OCI-LY7 (cell line): ENCODE measurements at regions of chr14 and their contacts with region 1.

Region 1: DNA sequence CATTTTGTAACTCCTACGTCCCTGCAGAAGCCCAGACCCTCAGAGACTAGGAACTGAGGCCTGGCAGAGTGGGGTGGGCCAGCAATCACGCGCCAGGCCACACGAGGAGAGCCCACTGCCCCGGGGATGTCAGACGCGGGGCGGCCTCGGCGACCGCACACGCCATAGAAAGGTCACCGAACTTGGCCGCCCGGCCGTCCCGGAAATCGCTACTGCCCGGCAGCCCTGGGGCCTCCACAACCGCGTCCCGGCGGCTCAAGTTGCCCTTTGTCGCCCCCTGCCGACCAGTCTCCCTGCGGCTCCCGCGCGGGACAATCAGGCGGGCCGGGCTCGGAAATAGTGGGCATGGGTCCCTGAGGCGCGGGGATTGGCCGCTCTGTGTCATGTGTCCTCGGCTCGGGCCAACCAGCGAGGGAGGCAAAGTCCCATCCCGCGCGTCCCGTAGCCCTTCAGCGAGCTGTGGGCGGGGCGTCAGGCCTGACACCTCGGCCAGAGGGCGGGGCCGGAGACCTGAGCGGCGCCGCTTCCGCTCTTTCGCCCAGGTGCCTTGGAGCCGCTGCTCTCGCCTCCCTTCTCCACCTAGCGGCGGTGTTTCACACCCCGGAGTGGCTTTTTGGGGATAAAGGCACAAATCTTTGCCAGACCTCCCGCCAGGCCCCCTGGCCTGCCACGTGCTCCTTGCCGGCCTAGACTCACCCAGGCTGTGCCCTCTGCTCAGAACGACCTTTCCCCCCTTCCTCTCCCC is 33.4 kb upstream of the DEGS2 start:
- DNase-seq: peak; percentile 100
- H3K4me3 ChIP-seq: peak overlapping the region; percentile 65
- H3K27ac ChIP-seq: peak overlapping the region; percentile 48
- H3K4me1 ChIP-seq: peaks cover 17% of the 10 kb centered on the region
- CTCF ChIP-seq: peak; percentile 84

Region 2: DNA sequence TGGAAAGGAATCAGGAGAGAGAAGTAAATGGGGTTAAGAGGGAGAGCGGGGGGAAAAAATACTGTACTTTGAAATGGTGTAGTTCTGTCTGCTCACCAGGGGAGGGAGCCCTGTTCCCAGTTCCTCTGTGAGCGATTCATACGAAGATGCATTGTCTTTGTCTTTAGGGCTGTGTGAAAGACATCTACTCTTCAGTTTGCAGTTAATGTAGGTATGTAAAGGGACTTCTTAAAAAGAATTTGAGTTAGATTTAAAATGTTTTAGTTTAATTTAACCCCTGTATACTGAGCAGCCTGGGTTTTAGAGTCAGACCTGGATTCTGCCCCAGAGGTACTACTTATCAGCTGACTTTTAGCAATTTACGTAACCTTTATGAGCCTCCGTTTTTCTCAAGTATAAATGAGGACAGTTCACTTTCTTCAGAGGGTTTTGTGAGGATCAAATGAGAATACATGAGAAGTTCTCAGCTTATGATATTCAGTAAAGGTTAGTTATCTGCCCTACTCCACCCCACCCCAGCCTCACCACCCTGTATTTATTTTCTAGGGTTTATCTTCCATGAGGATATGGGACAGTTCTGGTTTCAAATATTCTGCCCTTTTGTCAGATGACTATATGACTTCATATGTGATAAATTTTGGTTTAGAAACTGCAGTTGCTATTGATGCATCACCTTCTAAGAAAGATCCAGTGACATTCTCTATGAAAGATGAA is 210.2 kb before region 1 on chr14:
- CTCF ChIA-PET with region 1: no interaction called
- POLR2A ChIA-PET with region 1: interaction called, 3 read pairs
- intact Hi-C with region 1: loop called (anchors 1 kb)
- DNase-seq: peak; percentile 72
- H3K4me3 ChIP-seq: no peak overlapping the region
- H3K27ac ChIP-seq: no peak overlapping the region
- H3K4me1 ChIP-seq: peaks cover 3% of the 10 kb centered on the region
- CTCF ChIP-seq: peak; percentile 97

Region 3: GRCh38 chr14:99995700-99996356 is 197.0 kb before region 1 on chr14:
- CTCF ChIA-PET with region 1: no interaction called
- POLR2A ChIA-PET with region 1: no interaction called
- intact Hi-C with region 1: no loop called
- DNase-seq: peak; percentile 89
- H3K4me3 ChIP-seq: no peak overlapping the region
- H3K27ac ChIP-seq: no peak overlapping the region
- H3K4me1 ChIP-seq: peaks cover 9% of the 10 kb centered on the region
- CTCF ChIP-seq: peak; percentile 92

Region 4: DNA sequence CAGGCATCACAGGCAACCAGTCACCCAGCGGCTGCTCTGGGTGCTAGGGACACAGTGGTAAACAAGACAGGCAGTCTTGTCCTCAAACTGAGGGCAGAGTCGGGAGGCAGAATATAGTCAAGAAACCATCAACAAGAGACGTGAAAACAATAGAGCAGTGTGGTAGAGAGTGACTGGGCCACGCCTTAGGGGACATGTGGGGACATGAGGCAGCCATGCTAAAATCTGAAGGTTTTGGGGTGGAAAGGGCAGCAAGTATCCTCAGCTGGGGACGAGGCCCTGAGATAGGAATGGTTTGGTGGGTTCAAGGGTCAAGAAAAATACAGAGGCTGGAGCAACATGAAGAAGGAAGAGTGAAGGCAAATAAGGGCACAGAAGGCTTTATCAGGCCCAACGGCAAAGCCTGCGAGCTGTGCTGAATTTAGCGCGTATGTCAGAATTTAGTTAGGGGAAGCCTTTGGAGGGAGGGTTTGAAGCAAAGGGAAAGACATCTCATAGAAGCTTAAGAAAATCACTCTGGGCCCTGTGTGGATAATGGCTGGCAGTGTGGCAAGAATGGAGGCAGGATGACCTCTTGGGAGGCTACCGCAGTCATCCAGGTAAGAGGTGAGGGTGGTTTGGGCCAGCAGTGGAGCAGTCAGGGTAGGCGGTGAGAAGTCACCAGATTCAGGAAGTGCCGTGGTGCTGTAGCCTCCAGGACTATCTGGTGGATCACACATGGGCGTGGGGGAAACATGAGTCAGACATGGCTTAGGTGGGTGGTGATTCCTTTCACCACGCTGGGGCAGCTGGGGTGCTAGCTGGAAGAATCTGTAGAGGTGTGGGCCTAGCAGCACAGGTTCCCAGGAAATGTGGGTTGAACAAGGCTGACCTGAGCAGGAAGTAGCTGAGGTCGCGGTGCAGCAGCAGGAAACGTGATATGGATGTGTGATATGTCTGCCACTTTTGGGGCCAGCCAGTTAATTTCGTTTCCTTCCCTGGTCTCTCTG is 124.6 kb before region 1 on chr14:
- CTCF ChIA-PET with region 1: interaction called, 4 read pairs
- POLR2A ChIA-PET with region 1: no interaction called
- intact Hi-C with region 1: loop called (anchors 2 kb)
- DNase-seq: peak; percentile 75
- H3K4me3 ChIP-seq: peak overlapping the region; percentile 74
- H3K27ac ChIP-seq: peak overlapping the region; percentile 99
- H3K4me1 ChIP-seq: peaks cover 97% of the 10 kb centered on the region
- CTCF ChIP-seq: no peak

Region 5: DNA sequence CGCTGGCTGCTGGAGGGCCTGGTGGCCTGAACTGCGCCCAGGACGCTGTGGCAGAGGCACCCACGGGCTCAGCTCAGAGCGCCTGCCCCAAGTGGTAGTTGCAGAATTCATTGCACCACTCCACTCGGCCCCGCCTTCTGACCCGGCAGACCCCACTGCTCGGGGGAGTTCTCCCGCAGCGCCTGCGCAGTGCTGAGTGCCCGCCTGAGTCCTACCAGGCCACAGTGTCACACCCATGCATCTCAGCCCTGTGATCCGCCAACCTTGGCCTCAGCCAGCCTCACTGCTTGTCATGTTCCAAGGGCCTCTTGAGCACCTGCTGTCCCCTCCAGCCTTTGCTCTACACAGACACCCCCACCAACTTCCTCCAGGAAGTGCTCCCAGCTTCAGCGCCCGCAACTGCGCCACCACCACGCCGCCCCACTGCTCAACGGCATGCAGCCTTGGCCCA is 45.6 kb before region 1 on chr14:
- CTCF ChIA-PET with region 1: no interaction called
- POLR2A ChIA-PET with region 1: no interaction called
- intact Hi-C with region 1: loop called (anchors 2 kb)
- DNase-seq: peak; percentile 83
- H3K4me3 ChIP-seq: peak overlapping the region; percentile 20
- H3K27ac ChIP-seq: peak overlapping the region; percentile 27
- H3K4me1 ChIP-seq: peaks cover 22% of the 10 kb centered on the region
- CTCF ChIP-seq: 0 out of 2 replicates have a peak, but pooled peaks have one; percentile 16

Region 6: DNA sequence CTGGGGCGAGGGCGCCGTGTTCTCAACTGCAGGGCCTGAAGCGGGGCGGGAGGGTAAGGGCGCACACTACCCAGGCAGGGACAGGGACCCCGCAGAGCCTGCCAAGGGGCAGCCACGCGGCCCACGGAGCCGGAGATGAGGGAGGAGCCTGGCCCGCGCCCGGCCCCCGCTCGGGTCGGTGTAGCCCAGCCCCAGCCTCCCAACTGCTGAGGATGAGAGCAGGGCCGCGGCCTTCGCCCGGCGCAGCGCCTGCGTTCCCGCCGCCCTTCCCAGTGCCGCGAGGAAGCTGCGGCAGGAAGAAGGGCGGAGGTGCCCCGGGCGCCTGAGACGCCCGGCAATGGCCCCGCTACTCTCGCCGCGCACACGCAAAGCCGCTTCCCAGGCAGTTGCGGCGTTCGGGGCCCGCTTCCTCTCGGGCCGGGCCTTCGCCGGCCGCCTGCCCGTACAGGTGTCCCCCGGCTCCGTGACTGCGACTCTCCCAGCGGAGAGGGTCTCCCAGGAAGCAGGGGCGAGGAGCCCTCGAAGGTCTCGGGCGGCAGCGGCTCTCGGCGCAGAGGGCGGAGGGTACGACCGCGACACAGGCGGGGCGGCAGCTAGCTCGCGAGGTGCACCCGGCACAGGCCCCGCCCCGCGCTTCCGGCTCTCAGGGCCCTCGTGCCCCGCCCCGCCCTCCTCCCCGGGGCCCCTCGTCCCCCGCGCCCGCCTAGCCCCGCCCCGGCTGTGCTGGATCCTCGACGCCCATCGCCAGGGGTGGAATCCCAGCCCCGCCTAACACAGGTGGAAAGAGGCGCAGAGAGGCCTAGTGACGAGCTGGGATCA is 21.3 kb after region 1 on chr14:
- CTCF ChIA-PET with region 1: interaction called, 7 read pairs
- POLR2A ChIA-PET with region 1: interaction called, 3 read pairs
- intact Hi-C with region 1: loop called (anchors 2 kb)
- DNase-seq: peak; percentile 93
- H3K4me3 ChIP-seq: peak overlapping the region; percentile 77
- H3K27ac ChIP-seq: peak overlapping the region; percentile 69
- H3K4me1 ChIP-seq: peaks cover 21% of the 10 kb centered on the region
- CTCF ChIP-seq: no peak

Region 7: DNA sequence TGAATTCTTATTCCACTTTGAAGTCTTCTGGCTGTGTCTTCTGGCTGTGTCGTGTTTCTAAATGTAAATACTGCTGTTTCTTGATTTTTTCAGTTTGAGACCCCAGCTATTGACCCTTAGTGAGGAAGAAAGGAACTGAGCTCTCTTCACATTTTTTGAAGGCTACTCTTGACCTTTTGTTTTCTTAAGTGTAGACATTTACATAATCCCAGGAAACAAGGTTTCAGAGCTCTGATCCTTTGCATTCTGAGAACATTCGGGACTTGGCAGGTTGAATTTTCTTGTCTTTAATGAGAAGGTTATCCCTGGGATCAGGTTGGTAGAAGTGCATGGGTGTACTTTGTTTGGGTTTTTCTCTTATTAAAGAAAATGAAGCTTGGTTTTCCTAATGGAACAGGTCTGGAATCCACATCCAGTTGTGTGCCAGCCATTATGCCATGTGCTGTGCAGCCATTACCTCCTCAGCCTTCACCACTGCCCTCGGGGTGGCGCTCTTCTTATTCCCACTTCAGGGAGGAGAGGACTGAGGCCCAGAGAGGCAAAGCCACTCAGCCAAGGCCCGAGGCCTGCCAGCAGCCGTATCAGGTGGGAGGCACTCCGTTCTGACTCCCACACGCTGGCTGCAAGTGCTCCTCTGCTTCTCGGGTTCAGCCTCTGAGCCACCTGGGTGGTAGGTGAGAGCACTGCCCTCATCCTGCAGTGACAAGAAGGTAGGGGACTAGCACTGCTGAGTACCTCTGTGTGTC is 273.4 kb after region 1 on chr14:
- CTCF ChIA-PET with region 1: no interaction called
- POLR2A ChIA-PET with region 1: no interaction called
- intact Hi-C with region 1: no loop called
- DNase-seq: no peak
- H3K4me3 ChIP-seq: no peak overlapping the region
- H3K27ac ChIP-seq: no peak overlapping the region
- H3K4me1 ChIP-seq: no peaks in the 10 kb centered on the region
- CTCF ChIP-seq: no peak